Colonic mucosa (tissue), 4 donors: ENCODE measurements at regions of chr11 and their contacts with region 1.

Region 1: GRCh38 chr11:68621826-68622225 is 62.5 kb upstream of the GAL start:
- DNase-seq: no peak
- H3K4me3 ChIP-seq: no peak overlapping the region
- H3K27ac ChIP-seq: no peak overlapping the region
- H3K4me1 ChIP-seq: no peaks in the 10 kb centered on the region
- H3K27me3 ChIP-seq: no peaks in the 10 kb centered on the region
- CTCF ChIP-seq: no peak

Region 2: GRCh38 chr11:68798221-68798813 is 176.5 kb after region 1 on chr11:
- intact Hi-C with region 1: loop called (anchors 10 kb)
- DNase-seq: peak; percentile 36
- H3K4me3 ChIP-seq: no peak overlapping the region
- H3K27ac ChIP-seq: no peak overlapping the region
- H3K4me1 ChIP-seq: no peaks in the 10 kb centered on the region
- H3K27me3 ChIP-seq: no peaks in the 10 kb centered on the region
- CTCF ChIP-seq: peak; percentile 46